CD8-positive, alpha-beta memory T cell (primary cell): ENCODE measurements at regions of chr6 and their contacts with region 1.

Region 1: DNA sequence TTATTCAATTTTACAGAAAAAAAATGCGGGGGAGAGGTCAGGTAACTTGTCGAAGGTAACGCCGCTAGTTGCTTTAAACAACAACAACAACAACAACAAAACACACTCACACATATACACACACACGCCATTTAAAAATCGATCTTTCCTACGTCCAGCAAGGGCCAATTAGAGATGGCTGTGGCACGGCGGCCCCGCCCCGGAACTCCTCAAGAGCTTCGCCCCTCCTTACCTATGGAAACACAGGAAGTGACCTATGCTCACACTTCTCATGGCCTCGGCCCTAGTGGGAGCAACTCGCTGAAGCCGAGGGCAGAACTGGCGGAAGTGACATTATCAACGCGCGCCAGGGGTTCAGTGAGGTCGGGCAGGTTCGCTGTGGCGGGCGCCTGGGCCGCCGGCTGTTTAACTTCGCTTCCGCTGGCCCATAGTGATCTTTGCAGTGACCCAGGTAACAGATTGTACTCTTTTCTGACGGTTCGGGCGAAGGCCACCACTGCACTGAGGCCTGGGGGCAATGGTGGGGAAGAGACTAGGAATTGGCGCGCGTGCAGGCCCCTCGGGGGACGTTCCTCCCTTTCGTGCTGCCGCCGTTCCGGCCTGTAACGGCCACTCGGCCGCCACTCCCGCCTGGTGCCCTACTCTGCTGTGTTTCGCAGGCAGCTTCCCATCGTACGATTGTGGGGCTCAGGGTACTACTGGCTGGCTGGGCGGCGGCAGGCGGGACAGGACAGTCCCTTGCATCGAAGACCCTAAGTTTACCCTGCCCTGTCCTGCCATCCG is at the start of gene TBP:
- DNase-seq: peak; percentile 94 to 98 (median 97)
- H3K4me3 ChIP-seq: peak within 1 kb of the TSS; percentile 78
- H3K4me3 Mint-ChIP-seq: no peak within 1 kb of the TSS
- H3K27ac ChIP-seq: peak within 1 kb of the TSS; percentile 93
- H3K27ac Mint-ChIP-seq: no peak within 1 kb of the TSS
- H3K4me1 ChIP-seq: peaks cover 39% of the 10 kb centered on the region
- H3K4me1 Mint-ChIP-seq: peaks cover 13 to 31% (median 23%) of the 10 kb centered on the region in 3 donors
- H3K27me3 ChIP-seq: no peaks in the 10 kb centered on the region
- H3K27me3 Mint-ChIP-seq: no peaks in the 10 kb centered on the region
- total RNA-seq, gene TBP: 26.0 to 28.2 TPM

Region 2: GRCh38 chr6:169751242-169752073 is 802.7 kb before region 1 on chr6 and contains the starts of genes DYNLT2 and ERMARD:
- CTCF ChIA-PET with region 1: no interaction called
- POLR2A ChIA-PET with region 1: interaction called, 15 read pairs
- DNase-seq: peak; percentile 87 to 96 (median 94)
- H3K4me3 ChIP-seq: peak within 1 kb of the TSS; percentile 63
- H3K4me3 Mint-ChIP-seq: peak within 1 kb of the TSS; percentile 97 to 100 (median 99)
- H3K27ac ChIP-seq: peak within 1 kb of the TSS; percentile 93
- H3K27ac Mint-ChIP-seq: peak within 1 kb of the TSS; percentile 97 to 100 (median 100)
- H3K4me1 ChIP-seq: peaks cover 27% of the 10 kb centered on the region
- H3K4me1 Mint-ChIP-seq: peaks cover 34 to 38% (median 35%) of the 10 kb centered on the region in 3 donors
- H3K27me3 ChIP-seq: no peaks in the 10 kb centered on the region
- H3K27me3 Mint-ChIP-seq: no peaks in the 10 kb centered on the region
- total RNA-seq, gene DYNLT2: 1.4 to 1.9 TPM
- total RNA-seq, gene ERMARD: 26.2 to 27.9 TPM

Region 3: DNA sequence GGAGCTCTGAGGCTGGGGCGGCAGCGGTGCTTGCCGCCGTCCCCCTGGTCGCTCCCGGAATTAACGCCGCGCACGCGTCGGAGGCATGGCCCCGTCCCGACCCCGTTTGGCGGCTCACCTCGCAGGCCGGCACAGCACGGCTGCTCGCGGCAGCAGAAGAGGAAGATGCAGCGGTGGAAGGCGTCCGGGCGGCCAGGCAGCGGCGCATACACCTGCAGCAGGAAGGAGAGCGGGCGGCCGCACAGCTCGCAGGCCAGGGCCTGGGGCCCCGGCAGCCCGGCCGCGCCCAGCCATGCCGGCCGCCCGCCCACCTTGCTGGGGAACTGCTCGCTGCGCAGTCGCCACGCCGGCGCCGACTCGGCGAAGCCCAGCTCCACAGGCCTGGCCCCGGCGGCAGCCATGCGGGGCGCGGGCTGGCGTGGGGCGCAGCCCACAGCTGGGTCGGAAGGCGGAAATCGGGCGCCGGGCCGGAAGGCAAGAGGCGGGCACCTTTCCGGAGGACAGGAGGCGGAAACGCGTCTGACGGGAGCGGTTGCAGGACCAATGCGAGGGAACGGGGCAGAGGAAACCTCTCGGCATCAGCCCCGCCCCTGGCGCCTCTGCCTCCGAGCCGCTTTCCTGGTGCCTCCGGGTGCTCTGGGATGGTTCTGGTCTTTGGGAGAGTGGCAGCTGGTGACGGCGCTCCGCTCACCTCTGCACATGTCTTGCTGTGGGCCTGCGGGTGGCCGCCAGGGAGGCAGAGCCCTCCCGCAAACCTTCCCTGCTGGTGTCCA is 30.2 kb after region 1 on chr6 and contains the start of gene PDCD2:
- CTCF ChIA-PET with region 1: interaction called, 10 read pairs
- POLR2A ChIA-PET with region 1: interaction called, 43 read pairs
- DNase-seq: peak; percentile 88 to 94 (median 90)
- H3K4me3 ChIP-seq: peak within 1 kb of the TSS; percentile 99
- H3K4me3 Mint-ChIP-seq: peak within 1 kb of the TSS; percentile 95 to 98 (median 98)
- H3K27ac ChIP-seq: peak within 1 kb of the TSS; percentile 89
- H3K27ac Mint-ChIP-seq: peak within 1 kb of the TSS; percentile 98 to 99 (median 98)
- H3K4me1 ChIP-seq: peaks cover 21% of the 10 kb centered on the region
- H3K4me1 Mint-ChIP-seq: peaks cover 30 to 40% (median 37%) of the 10 kb centered on the region in 3 donors
- H3K27me3 ChIP-seq: no peaks in the 10 kb centered on the region
- H3K27me3 Mint-ChIP-seq: peaks cover 1 to 4% of the 10 kb centered on the region in 2 donors
- total RNA-seq, gene PDCD2: 155 to 158 TPM